Activated CD4-positive, alpha-beta T cell treated with anti-CD3 and anti-CD28 coated beads for 36 hours (primary cell): ENCODE measurements at regions of chr9 and their contacts with region 1.

Region 1: GRCh38 chr9:124040935-124041816 is 29.6 kb downstream of the LHX2 start:
- DNase-seq: peak; percentile 72
- ATAC-seq: peak; percentile 46
- H3K4me3 Mint-ChIP-seq: no peak overlapping the region
- H3K27ac Mint-ChIP-seq: peak overlapping the region; percentile 55
- H3K4me1 Mint-ChIP-seq: peaks cover 14% of the 10 kb centered on the region
- H3K27me3 Mint-ChIP-seq: peaks cover 59% of the 10 kb centered on the region

Region 2: DNA sequence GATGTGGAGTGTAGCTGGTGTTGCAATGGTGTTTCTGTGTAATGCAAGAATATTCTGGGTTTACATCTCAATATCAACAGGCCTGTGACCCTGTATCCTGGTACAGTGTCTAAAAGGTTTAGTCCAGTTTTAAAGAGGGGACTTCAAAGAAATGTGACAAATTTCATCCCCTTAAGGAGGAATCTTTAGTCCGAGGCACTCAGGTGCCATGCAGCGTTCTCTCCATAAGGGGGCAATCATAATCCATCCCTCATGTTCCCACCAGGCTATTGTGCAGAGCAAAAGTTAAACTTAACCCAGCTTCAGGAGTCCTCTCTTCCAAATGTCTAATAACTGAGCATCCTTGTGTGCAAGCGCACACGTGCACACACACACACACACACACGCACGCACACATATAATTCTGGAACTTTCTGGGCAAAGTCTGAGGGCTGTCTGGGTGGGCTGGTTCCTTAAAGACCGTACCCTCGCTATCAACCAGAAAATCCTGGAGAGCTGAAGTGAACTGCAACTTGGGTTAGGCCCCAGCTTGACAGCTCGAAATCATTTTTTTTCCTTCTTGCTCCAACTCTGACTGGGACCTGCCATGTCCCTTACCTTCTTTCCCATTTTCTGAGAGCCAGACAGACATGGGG is 639.2 kb before region 1 on chr9:
- CTCF ChIA-PET with region 1: interaction called, 6 read pairs
- POLR2A ChIA-PET with region 1: no interaction called
- intact Hi-C with region 1: loop called (anchors 2 to 10 kb)
- DNase-seq: peak; percentile 36
- ATAC-seq: no peak
- H3K4me3 Mint-ChIP-seq: no peak overlapping the region
- H3K27ac Mint-ChIP-seq: no peak overlapping the region
- H3K4me1 Mint-ChIP-seq: peaks cover 3% of the 10 kb centered on the region
- H3K27me3 Mint-ChIP-seq: no peaks in the 10 kb centered on the region

Region 3: DNA sequence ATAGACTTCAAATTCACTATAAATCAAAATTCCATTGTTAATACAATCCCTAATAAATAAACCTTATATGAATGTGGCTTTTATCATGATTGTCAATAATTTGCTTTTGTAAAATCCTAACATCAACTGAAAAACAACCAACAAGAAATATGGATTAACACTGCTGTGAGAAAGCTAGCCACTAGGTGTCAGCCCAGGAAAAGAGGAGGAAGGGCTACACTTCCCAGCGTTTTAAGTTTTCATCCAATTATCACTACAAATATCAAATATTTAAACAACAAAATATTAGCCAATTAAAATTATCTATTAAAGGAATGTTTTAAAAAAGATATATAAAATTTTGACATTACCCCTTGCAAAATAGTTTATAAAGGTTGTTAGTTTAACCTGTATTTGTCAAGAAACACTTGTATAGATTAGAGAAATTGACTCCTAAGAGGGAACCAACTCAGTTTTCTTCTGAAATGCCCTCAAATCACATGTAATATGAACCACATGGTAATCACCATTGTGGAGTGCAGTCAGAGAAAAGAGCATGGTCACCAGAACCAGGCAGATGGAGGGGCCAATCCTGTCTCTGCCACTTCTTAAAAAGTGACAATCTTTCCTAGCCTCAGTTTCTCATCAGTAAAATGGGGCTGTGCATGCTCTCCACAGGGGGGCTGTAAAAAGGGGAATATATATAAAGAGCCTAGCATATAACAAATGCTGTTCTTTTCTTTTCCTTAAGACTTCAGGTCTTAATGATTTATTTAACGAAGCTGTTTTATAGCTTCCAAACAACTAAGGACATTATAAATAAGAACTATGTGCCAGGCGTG is 497.0 kb before region 1 on chr9:
- CTCF ChIA-PET with region 1: interaction called, 13 read pairs
- POLR2A ChIA-PET with region 1: no interaction called
- intact Hi-C with region 1: loop called (anchors 1 kb)
- DNase-seq: peak; percentile 44
- ATAC-seq: no peak
- H3K4me3 Mint-ChIP-seq: no peak overlapping the region
- H3K27ac Mint-ChIP-seq: no peak overlapping the region
- H3K4me1 Mint-ChIP-seq: peaks cover 8% of the 10 kb centered on the region
- H3K27me3 Mint-ChIP-seq: no peaks in the 10 kb centered on the region

Region 4: DNA sequence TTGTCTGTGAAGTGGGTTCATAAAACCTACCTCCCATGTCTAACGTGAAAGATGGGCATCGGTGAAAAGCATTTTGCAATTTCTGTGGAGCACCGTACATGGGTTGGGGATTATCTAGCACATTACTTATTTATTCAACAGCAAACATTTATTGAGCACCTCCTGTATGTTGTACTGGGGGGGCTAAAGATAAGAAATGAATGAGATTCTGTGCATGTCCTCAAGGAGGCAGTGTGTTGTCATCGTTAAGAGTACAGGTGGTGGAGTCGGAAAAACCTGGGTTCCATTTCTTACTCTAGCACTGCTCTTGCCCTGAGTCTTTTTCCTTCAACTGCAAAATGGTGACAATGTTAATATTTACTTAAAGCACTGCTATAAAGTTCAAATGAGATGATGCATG is 80.8 kb before region 1 on chr9:
- CTCF ChIA-PET with region 1: interaction called, 7 read pairs
- POLR2A ChIA-PET with region 1: no interaction called
- intact Hi-C with region 1: loop called (anchors 1 to 5 kb)
- DNase-seq: no peak
- ATAC-seq: no peak
- H3K4me3 Mint-ChIP-seq: no peak overlapping the region
- H3K27ac Mint-ChIP-seq: no peak overlapping the region
- H3K4me1 Mint-ChIP-seq: peaks cover 5% of the 10 kb centered on the region
- H3K27me3 Mint-ChIP-seq: peaks cover 21% of the 10 kb centered on the region